ENCODE measurements at regions of chr11 and their contacts with region 1.

Region 1: GRCh38 chr11:82718307-82718706 is 15.4 kb downstream of the FAM181B start:
- DNase-seq: no peak
- H3K4me3 ChIP-seq: no peak overlapping the region
- H3K27ac ChIP-seq: no peak overlapping the region
- H3K4me1 ChIP-seq: no peaks in the 10 kb centered on the region
- H3K27me3 ChIP-seq: no peaks in the 10 kb centered on the region
- CTCF ChIP-seq: peak; percentile 58 to 70 (median 64)
- EP300 ChIP-seq: no peak
- POLR2A ChIP-seq: no peak

Region 2: DNA sequence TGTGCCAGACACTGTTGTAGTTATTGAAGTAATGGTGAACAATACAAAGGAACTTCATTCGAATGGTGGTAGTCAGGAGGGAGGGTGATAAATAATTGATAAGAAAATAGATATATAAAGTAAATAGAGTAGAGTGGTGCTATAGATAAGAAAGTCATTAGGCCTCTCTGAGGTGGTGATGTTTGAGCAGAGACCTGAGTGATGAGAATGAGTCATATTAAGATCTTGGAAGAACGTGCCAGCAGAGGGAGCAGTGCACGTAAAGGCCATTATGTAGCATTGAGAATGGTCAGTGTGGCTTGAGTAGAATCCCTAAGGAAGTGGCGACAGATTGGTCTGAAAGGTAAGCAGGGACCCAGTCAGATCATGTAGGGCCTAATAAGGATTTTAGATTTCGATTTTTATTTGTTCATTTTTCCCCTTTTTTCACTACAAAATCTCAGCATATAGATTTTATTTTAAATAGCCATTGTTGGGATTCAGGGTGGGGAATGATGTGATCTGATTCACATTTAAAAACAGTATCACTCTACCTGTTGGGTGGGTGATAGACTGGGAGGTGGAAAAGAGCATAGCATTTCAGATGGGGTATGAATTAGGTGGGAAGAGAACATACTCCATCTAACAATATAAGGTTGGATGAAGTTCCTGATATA is 523.1 kb after region 1 on chr11:
- in situ Hi-C with region 1: loop called in 2 of 4 experiments (anchors 25 kb)
- intact Hi-C with region 1: no loop called
- DNase-seq: peak; percentile 52
- H3K4me3 ChIP-seq: no peak overlapping the region
- H3K27ac ChIP-seq: no peak overlapping the region
- H3K4me1 ChIP-seq: no peaks in the 10 kb centered on the region
- H3K27me3 ChIP-seq: no peaks in the 10 kb centered on the region
- CTCF ChIP-seq: peak; percentile 36 to 51 (median 48)
- EP300 ChIP-seq: no peak
- POLR2A ChIP-seq: no peak

Region 3: DNA sequence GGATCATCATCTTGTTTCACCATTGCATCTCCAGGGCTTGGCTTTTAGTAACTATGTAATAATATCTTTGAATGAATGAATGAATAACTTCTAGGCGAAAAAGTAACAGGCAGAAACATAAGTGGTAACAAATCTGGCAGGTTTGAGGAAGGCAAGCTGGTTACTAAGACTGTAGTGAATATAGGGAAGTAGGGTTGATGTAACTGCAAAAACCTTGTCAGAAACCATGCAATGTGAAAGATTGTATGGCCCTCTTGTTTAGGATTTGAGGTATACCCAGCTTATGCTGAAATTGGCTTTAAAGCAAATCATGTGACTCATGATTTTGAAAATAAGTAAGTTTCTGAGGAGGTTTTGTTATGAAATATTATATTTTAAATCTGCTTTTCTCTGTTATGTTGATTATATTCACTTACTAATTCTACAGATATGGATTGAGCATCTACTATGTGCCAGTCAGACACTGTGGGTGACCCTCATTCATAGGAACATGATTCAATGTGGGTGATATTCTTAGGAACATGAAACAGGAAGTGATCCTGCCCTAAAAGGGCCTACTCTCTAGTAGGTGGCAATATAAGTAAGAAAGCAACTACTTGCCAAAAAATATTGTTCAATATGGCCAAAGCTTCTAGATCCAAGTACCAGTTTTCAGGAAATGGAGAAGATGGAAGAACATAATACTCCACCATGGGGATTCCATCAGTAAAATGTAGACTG is 683.4 kb after region 1 on chr11:
- in situ Hi-C with region 1: no loop called
- intact Hi-C with region 1: no loop called
- DNase-seq: no peak
- H3K4me3 ChIP-seq: no peak overlapping the region
- H3K27ac ChIP-seq: no peak overlapping the region
- H3K4me1 ChIP-seq: no peaks in the 10 kb centered on the region
- H3K27me3 ChIP-seq: no peaks in the 10 kb centered on the region
- CTCF ChIP-seq: no peak
- EP300 ChIP-seq: no peak
- POLR2A ChIP-seq: no peak